A673 (cell line): ENCODE measurements at regions of chr7 and their contacts with region 1.

Region 1: DNA sequence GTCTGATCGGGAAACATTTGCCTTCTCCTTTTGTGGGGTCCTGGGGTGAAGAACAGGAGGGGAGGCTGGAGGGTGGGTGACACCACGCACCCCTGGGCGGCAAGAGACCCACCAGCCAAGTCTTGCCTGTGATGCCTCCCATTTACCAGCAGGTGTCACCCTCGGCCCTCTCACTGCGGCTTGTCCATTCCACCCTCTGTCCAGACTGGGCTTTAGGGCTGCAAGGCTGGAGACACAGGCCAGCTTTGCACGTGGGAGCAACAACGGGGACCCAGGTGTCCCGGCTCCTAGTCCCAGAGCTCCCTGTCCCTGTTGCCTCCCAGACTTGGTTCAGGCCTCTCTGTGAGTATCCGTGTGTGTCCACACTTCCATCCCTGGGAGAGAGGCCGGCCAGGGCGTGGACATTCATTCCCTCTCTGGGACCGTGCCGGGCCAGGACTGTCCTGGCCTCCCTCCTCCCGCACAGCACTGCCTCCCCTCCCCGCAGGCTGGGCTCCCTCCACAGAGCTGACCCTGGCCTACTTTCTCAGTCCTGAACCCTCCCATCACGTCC is 36.2 kb upstream of the GTF2IRD1 start:
- DNase-seq: peak; percentile 64
- H3K4me3 ChIP-seq: no peak overlapping the region
- H3K27ac ChIP-seq: no peak overlapping the region
- H3K4me1 ChIP-seq: no peaks in the 10 kb centered on the region
- H3K27me3 ChIP-seq: no peaks in the 10 kb centered on the region
- CTCF ChIP-seq: peak; percentile 97

Region 2: GRCh38 chr7:74206589-74207120 is 210.8 kb before region 1 on chr7:
- CTCF ChIA-PET with region 1: interaction called, 10 read pairs
- POLR2A ChIA-PET with region 1: no interaction called
- intact Hi-C with region 1: no loop called
- DNase-seq: peak; percentile 69
- H3K4me3 ChIP-seq: peak overlapping the region; percentile 40
- H3K27ac ChIP-seq: no peak overlapping the region
- H3K4me1 ChIP-seq: no peaks in the 10 kb centered on the region
- H3K27me3 ChIP-seq: no peaks in the 10 kb centered on the region
- CTCF ChIP-seq: peak; percentile 99

Region 3: DNA sequence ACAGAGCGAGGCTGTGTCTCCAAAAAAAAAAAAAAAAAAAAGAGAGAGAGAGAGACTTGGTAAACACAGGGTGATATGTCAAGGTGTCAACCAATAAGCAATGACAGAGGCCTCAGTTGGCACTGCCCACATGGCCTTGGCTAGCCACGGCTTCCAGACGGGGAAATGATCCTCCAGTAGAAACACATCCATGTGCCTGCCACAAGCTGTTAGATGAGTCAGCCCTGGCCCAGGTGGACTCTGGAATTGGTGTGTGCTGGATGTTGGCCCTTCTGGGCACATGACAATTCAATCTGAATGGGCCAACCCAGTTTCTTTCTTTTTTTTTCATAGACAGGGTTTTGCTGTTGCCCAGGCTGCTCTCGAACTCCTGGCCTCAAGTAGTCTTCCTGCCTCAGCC is 177.0 kb before region 1 on chr7:
- CTCF ChIA-PET with region 1: no interaction called
- POLR2A ChIA-PET with region 1: no interaction called
- intact Hi-C with region 1: no loop called
- DNase-seq: no peak
- H3K4me3 ChIP-seq: no peak overlapping the region
- H3K27ac ChIP-seq: no peak overlapping the region
- H3K4me1 ChIP-seq: no peaks in the 10 kb centered on the region
- H3K27me3 ChIP-seq: no peaks in the 10 kb centered on the region
- CTCF ChIP-seq: no peak

Region 4: GRCh38 chr7:74569501-74570075 is 152.1 kb after region 1 on chr7:
- CTCF ChIA-PET with region 1: interaction called, 4 read pairs
- POLR2A ChIA-PET with region 1: no interaction called
- intact Hi-C with region 1: loop called (anchors 2 kb)
- DNase-seq: no peak
- H3K4me3 ChIP-seq: no peak overlapping the region
- H3K27ac ChIP-seq: no peak overlapping the region
- H3K4me1 ChIP-seq: no peaks in the 10 kb centered on the region
- H3K27me3 ChIP-seq: no peaks in the 10 kb centered on the region
- CTCF ChIP-seq: no peak

Region 5: GRCh38 chr7:74617180-74617744 is 199.8 kb after region 1 on chr7:
- CTCF ChIA-PET with region 1: interaction called, 10 read pairs
- POLR2A ChIA-PET with region 1: no interaction called
- intact Hi-C with region 1: no loop called
- DNase-seq: no peak
- H3K4me3 ChIP-seq: no peak overlapping the region
- H3K27ac ChIP-seq: no peak overlapping the region
- H3K4me1 ChIP-seq: peaks cover 6% of the 10 kb centered on the region
- H3K27me3 ChIP-seq: no peaks in the 10 kb centered on the region
- CTCF ChIP-seq: no peak

Region 6: DNA sequence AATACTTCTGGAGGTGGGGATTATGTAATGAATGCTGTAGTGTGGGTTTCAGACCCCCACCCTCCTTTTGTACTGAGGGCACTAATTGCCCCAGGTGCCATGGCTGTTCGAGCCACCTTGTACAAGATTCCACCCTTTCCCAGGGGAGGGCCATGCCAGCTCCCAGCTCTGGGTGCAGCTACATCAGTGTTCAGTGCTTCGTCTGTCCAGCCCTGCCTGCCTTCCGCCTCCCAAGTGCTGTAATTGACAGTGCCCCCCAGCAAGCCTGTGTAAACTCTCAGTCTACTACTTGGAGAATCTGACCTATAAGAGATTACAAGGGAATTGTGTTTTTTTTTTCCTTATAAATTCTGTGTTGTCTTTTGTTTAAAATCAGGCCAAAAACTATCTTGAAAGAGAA is 273.0 kb after region 1 on chr7:
- CTCF ChIA-PET with region 1: no interaction called
- POLR2A ChIA-PET with region 1: no interaction called
- intact Hi-C with region 1: loop called (anchors 10 kb)
- DNase-seq: no peak
- H3K4me3 ChIP-seq: no peak overlapping the region
- H3K27ac ChIP-seq: no peak overlapping the region
- H3K4me1 ChIP-seq: no peaks in the 10 kb centered on the region
- H3K27me3 ChIP-seq: no peaks in the 10 kb centered on the region
- CTCF ChIP-seq: no peak